Vagina (tissue), 2 donors: ENCODE measurements at regions of chr11 and their contacts with region 1.

Region 1: GRCh38 chr11:75867775-75868374 is 52.9 kb downstream of the UVRAG start:
- DNase-seq: no peak
- H3K4me3 ChIP-seq: no peak overlapping the region
- H3K27ac ChIP-seq: no peak overlapping the region
- H3K4me1 ChIP-seq: no peaks in the 10 kb centered on the region
- H3K27me3 ChIP-seq: no peaks in the 10 kb centered on the region
- CTCF ChIP-seq: peak; percentile 82 to 91 (median 90)
- POLR2A ChIP-seq: no peak

Region 2: DNA sequence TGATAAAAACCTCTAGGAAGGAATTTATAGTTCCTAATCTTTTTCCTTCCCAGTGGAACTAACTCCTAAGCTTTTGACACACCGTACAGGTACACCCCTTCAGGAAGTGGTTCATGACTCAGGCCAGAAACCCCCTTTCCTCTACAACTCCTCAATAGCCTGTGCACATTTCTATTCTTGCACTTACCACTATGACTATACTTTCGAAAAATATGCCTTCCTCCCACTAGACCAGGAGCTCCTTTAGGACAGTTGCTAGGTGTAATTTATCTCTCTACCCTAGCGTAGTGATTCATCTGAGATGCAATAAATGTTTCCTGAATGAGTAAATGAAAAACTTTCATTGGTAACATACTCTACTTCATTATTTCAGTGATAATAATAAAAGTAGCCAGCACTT is 213.6 kb before region 1 on chr11:
- intact Hi-C with region 1: no loop called
- DNase-seq: no peak
- H3K4me3 ChIP-seq: no peak overlapping the region
- H3K27ac ChIP-seq: no peak overlapping the region
- H3K4me1 ChIP-seq: no peaks in the 10 kb centered on the region
- H3K27me3 ChIP-seq: no peaks in the 10 kb centered on the region
- CTCF ChIP-seq: no peak
- POLR2A ChIP-seq: no peak

Region 3: GRCh38 chr11:75791015-75791414 is 76.9 kb before region 1 on chr11:
- intact Hi-C with region 1: no loop called
- DNase-seq: no peak
- H3K4me3 ChIP-seq: no peak overlapping the region
- H3K27ac ChIP-seq: no peak overlapping the region
- H3K4me1 ChIP-seq: no peaks in the 10 kb centered on the region
- H3K27me3 ChIP-seq: no peaks in the 10 kb centered on the region
- CTCF ChIP-seq: no peak
- POLR2A ChIP-seq: no peak

Region 4: DNA sequence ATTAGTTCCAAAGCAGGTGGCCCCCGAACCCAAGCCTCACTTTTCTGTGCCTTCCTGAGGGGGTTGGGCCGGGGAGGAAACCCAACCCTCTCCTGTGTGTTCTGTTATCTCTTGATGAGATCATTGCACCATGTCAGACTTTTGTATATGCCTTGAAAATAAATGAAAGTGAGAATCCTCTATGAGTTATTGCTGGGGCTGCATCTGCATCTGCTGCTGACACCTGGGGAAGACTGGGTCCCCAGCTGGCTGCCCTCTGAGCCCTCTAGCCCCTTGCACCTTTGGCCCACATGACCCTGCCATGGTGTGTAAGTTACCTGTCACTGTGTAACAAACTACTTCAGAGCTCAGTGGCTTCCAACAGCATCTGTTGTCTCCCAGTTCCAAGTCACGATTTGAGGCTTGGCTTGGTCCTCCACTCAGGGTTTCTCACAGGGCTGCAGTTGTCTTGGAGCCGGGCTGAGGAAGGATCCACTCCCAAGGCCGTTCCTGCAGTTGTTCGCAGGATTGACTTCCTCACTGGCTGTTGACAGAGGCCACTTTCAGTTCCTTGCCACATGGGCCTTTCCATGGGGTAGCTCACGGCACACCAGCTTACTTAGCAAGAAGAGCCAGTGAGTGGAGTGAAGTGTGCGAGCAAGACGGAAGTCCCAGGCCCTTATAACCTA is 66.4 kb before region 1 on chr11:
- intact Hi-C with region 1: loop called (anchors 2 kb)
- DNase-seq: no peak
- H3K4me3 ChIP-seq: no peak overlapping the region
- H3K27ac ChIP-seq: no peak overlapping the region
- H3K4me1 ChIP-seq: peaks cover 8% of the 10 kb centered on the region
- H3K27me3 ChIP-seq: no peaks in the 10 kb centered on the region
- CTCF ChIP-seq: no peak
- POLR2A ChIP-seq: no peak